ENCODE measurements at regions of chr15 and their contacts with region 1.

Region 1: DNA sequence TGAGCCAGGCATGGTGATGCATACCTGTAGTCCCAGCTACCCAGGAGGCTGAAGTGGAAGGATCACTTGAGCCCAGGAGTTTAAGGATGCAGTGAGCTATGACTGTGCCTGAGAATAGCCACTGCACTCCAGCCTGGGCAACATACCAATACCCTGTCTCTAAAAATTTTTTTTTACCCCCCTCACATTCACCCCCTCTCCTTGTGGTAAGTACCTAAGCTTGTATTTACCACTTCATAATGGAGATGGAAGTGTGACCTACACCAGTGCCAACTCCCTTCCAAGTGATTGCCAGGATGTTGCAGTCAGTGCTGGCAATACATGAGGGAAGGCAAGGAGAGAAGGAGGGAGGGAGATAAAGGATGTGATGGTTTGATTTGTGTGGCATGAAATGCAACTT is 84.2 kb downstream of the LRRC28 start:
- DNase-seq: no peak
- H3K4me3 ChIP-seq: no peak overlapping the region
- H3K27ac ChIP-seq: no peak overlapping the region
- H3K4me1 ChIP-seq: no peaks in the 10 kb centered on the region
- H3K27me3 ChIP-seq: no peaks in the 10 kb centered on the region
- CTCF ChIP-seq: no peak

Region 2: DNA sequence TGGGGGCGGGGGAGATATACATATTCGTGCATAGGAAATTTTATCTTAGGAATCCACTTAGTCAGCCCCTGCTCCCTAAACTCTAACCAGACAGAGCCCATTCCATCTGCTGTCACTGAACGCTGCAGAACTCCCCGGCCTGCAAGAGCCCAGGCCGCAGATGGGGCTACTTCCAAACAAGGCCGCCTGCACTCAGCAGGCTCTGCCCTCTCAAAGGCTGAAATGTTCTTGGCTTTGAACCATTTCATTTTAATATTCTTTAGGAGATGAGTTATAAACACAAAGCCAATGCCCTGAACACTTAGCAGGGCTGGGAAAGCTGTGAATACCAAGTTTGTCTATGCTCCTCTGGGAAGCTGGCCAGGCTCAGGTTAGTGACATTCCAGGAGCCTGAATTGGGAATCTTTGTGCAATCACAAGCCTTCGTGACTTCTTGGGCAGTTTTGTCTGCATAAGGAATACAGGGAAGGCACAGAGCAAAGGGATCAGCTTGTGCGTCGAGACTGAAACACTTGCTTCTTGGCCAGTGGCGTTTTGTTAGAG is 165.7 kb before region 1 on chr15:
- CTCF ChIA-PET with region 1: no interaction called
- dilution Hi-C with region 1: no loop called
- in situ Hi-C with region 1: no loop called
- intact Hi-C with region 1: no loop called
- DNase-seq: no peak
- H3K4me3 ChIP-seq: no peak overlapping the region
- H3K27ac ChIP-seq: no peak overlapping the region
- H3K4me1 ChIP-seq: no peaks in the 10 kb centered on the region
- H3K27me3 ChIP-seq: no peaks in the 10 kb centered on the region
- CTCF ChIP-seq: no peak

Region 3: DNA sequence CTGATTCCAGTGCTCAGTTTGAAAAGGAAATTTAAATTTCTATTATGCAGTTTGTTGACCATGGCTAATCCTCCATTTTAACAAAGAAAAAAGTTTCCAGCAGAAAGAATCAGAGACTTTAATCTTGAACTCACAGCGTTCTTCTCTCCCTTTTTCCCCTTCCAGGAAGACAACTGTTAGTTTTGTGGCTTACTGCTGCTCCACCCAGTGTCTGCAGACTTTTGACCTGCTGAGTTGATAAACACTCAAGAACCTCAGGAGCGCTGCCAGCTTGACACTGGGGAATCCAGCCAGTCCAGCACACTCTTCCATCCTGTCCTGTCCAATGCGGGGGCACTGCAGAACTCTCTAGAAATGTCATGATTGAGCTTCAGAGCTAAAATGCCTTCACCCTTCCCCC is 50.4 kb after region 1 on chr15:
- CTCF ChIA-PET with region 1: no interaction called
- dilution Hi-C with region 1: loop called (anchors 10 kb)
- in situ Hi-C with region 1: no loop called
- intact Hi-C with region 1: no loop called
- DNase-seq: no peak
- H3K4me3 ChIP-seq: no peak overlapping the region
- H3K27ac ChIP-seq: no peak overlapping the region
- H3K4me1 ChIP-seq: no peaks in the 10 kb centered on the region
- H3K27me3 ChIP-seq: no peaks in the 10 kb centered on the region
- CTCF ChIP-seq: no peak